Activated T-helper 2 cell treated with anti-CD3 and anti-CD28 coated beads, Interferon-gamma antibody, Interleukin-2, Interleukin-4, amounts not matched to agents 10 μg/mL and 5 μg/mL and 100 μg/mL, durations not matched to agents 14 hours and 24 hours and 36 hours (primary cell): ENCODE measurements at regions of chr5 and their contacts with region 1.

Region 1: GRCh38 chr5:132639706-132640130 is 18.3 kb upstream of the IL13 start:
- DNase-seq: no peak
- H3K4me3 Mint-ChIP-seq: peak overlapping the region; percentile 39
- H3K27ac Mint-ChIP-seq: peak overlapping the region; percentile 82
- H3K4me1 Mint-ChIP-seq: peaks cover 83% of the 10 kb centered on the region
- H3K27me3 Mint-ChIP-seq: no peaks in the 10 kb centered on the region

Region 2: GRCh38 chr5:132094393-132095076 is 545.2 kb before region 1 on chr5:
- intact Hi-C with region 1: loop called (anchors 5 kb)
- DNase-seq: no peak
- H3K4me3 Mint-ChIP-seq: no peak overlapping the region
- H3K27ac Mint-ChIP-seq: peak overlapping the region; percentile 77
- H3K4me1 Mint-ChIP-seq: peaks cover 70% of the 10 kb centered on the region
- H3K27me3 Mint-ChIP-seq: no peaks in the 10 kb centered on the region

Region 3: GRCh38 chr5:132526290-132526973 is 113.3 kb before region 1 on chr5:
- intact Hi-C with region 1: loop called (anchors 1 kb)
- DNase-seq: peak; percentile 36
- H3K4me3 Mint-ChIP-seq: no peak overlapping the region
- H3K27ac Mint-ChIP-seq: peak overlapping the region; percentile 31
- H3K4me1 Mint-ChIP-seq: peaks cover 54% of the 10 kb centered on the region
- H3K27me3 Mint-ChIP-seq: no peaks in the 10 kb centered on the region

Region 4: GRCh38 chr5:132586063-132586462 is 53.7 kb before region 1 on chr5:
- intact Hi-C with region 1: loop called (anchors 2 kb)
- DNase-seq: no peak
- H3K4me3 Mint-ChIP-seq: no peak overlapping the region
- H3K27ac Mint-ChIP-seq: peak overlapping the region; percentile 21
- H3K4me1 Mint-ChIP-seq: peaks cover 16% of the 10 kb centered on the region
- H3K27me3 Mint-ChIP-seq: no peaks in the 10 kb centered on the region

Region 5: DNA sequence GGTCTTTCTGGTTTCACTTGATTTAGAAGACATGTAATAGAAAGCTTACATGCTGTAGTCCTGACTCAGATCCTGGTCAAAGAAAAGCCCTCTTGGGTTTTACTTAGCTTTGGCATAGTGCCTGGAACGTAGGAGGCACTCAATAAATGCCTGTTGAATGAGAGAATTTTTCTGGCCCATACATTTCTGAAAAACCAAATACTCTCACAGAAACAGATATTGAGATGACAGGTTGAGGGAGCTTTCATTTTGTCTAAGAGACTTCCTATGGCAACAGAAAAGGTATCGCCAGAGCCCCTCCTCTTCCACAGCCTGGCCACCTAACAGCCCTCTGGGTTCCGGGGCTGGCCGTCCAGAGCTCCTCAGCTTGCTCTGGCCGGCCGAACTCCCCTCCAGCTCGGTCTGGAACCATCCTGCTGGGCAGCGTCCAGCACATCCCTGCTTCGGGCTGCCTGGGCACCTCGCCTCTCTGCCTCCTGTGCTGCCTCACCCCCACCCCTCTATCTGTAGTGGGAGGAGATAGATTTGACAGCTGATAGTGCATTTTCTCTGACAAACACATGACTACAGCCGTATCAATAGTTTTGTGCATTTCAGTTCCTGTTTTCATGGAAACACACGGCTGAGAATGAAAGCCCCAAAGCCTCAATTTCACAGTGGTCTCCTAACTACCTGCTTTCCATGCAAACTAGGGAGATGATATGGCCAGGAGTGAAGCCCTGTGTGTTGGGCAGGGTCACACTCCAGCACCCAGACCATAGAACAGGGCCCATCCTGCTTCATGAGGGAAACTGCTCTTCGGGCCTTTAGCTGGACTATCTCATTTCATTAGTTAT is 35.2 kb after region 1 on chr5:
- intact Hi-C with region 1: loop called (anchors 1 kb)
- DNase-seq: no peak
- H3K4me3 Mint-ChIP-seq: peak overlapping the region; percentile 70
- H3K27ac Mint-ChIP-seq: peak overlapping the region; percentile 95
- H3K4me1 Mint-ChIP-seq: peaks cover 40% of the 10 kb centered on the region
- H3K27me3 Mint-ChIP-seq: no peaks in the 10 kb centered on the region

Region 6: DNA sequence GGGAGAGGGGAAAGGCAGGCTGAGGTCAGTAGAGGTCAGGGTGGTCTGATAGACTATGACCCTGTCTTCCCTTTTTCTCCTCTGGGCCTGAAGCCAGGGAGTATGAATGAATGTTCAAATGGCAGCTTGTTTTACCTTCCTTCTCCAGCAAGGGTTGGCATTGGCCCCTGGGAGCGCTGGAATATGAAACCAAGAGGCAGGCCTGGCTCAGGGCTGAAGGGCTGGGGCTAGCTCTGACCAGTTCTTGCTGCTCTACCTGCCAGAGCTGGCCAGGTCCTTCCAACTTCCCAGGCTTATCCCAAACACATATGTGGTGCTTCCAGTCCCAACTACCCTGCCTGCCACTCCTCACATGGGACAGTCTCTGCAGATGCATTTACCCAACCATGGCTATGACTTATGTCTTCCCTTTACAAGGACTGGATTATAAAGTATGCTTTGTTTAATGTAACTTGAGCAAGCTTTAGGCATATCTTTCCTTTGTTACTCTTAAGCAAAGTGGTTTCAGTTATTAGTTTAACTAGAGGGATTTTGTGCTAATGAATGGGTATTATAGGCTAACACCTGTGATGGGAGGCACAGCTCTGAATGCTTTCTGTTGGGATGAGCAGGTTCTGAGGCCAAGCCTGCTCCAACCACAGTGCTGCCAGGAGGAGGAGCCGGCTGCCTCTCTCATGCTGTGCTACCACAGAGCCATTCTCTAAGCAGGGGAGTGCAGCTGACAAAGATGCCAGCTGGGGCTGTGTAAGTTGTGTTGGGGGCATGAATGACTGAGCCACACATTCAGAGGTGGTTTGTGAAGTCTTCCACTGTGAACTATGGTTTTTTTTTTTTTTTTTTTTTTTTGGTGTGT is 113.6 kb after region 1 on chr5:
- intact Hi-C with region 1: loop called (anchors 1 kb)
- DNase-seq: no peak
- H3K4me3 Mint-ChIP-seq: no peak overlapping the region
- H3K27ac Mint-ChIP-seq: peak overlapping the region; percentile 5
- H3K4me1 Mint-ChIP-seq: peaks cover 42% of the 10 kb centered on the region
- H3K27me3 Mint-ChIP-seq: peaks cover 4% of the 10 kb centered on the region